CD4-positive, alpha-beta T cell (primary cell): ENCODE measurements at regions of chr19 and their contacts with region 1.

Region 1: DNA sequence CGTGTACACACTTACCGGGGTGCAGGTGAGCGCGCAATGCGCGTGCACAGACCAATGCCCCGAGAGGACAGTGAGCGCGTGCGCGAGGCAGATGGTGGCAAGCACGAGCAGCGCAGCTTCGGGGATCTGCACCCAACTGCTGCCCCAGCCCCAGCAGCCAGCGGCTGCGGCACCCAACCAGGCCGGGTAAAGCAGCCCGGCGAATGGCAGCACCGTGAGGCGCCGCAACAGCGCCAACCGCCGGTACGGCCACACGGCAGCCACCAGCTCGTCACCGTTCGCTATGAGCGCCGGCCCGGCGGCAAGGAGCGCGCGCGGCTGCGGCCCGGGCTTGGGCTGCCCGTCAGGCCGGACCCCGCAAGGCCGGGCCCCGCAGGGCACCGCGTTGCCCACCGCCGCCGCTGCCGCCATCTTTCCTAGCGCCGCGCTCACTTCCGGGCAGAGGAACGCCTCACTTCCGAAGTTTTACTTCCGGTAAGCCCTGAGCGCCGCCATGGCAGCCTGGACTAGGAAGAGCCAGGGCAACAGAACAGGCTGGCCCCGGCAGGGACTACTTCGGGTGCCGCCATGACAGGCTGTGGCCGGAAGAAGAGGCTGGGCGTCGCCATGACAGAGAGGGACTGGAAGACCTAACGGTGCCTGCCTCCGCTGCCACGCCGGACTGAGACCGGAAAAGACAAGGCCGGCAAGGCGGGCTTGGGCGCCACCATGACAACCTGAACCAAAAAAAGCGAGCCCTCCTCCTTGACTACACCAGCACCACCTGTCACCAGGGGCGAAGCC is at the start of gene ATP13A1:
- DNase-seq: peak; percentile 88 to 99 (median 93)
- ATAC-seq: peak; percentile 67
- H3K4me3 ChIP-seq: peak within 1 kb of the TSS; percentile 94
- H3K4me3 Mint-ChIP-seq: peak within 1 kb of the TSS; percentile 95
- H3K27ac ChIP-seq: peak within 1 kb of the TSS; percentile 96
- H3K27ac Mint-ChIP-seq: peak within 1 kb of the TSS; percentile 99
- H3K4me1 ChIP-seq: peaks cover 70% of the 10 kb centered on the region
- H3K4me1 Mint-ChIP-seq: peaks cover 47% of the 10 kb centered on the region
- H3K27me3 ChIP-seq: no peaks in the 10 kb centered on the region
- H3K27me3 Mint-ChIP-seq: no peaks in the 10 kb centered on the region
- CTCF ChIP-seq: no peak
- total RNA-seq, gene ATP13A1: 84.8 to 87.6 TPM

Region 2: DNA sequence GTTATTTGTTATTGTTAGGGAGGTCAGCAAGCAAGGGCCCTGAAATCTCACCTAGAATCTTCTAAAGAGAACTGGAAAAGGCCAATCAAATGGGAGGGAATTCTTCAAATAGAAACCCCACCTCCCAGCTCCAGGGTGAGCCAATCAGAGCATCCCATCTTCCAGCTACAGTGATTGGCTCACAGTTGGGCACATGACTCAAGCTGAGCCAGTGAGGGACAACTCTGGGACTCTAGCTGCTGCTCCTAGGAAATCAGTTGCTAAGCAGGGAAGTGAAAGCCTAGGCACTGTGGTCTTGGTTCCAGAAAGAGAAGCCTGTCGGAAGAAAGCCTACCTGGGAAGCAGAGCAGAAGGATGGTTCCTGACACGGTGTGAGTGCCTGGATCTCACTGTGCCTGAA is 403.7 kb before region 1 on chr19:
- CTCF ChIA-PET with region 1: no interaction called
- POLR2A ChIA-PET with region 1: no interaction called
- intact Hi-C with region 1: no loop called
- DNase-seq: no peak
- ATAC-seq: no peak
- H3K4me3 ChIP-seq: no peak overlapping the region
- H3K4me3 Mint-ChIP-seq: no peak overlapping the region
- H3K27ac ChIP-seq: no peak overlapping the region
- H3K27ac Mint-ChIP-seq: no peak overlapping the region
- H3K4me1 ChIP-seq: peaks cover 15% of the 10 kb centered on the region
- H3K4me1 Mint-ChIP-seq: no peaks in the 10 kb centered on the region
- H3K27me3 ChIP-seq: peaks cover 27 to 61% of the 10 kb centered on the region in 2 experiments
- H3K27me3 Mint-ChIP-seq: peaks cover 73% of the 10 kb centered on the region
- CTCF ChIP-seq: no peak

Region 3: GRCh38 chr19:19320362-19321142 is 342.9 kb before region 1 on chr19 and contains the starts of genes MAU2 and SUGP1:
- CTCF ChIA-PET with region 1: no interaction called
- POLR2A ChIA-PET with region 1: no interaction called
- intact Hi-C with region 1: loop called in 1 of 2 experiments (anchors 5 kb)
- DNase-seq: peak; percentile 81 to 96 (median 88)
- ATAC-seq: peak; percentile 88
- H3K4me3 ChIP-seq: peak within 1 kb of the TSS; percentile 71
- H3K4me3 Mint-ChIP-seq: peak within 1 kb of the TSS; percentile 100
- H3K27ac ChIP-seq: peak within 1 kb of the TSS; percentile 92 to 95
- H3K27ac Mint-ChIP-seq: peak within 1 kb of the TSS; percentile 99
- H3K4me1 ChIP-seq: peaks cover 57% of the 10 kb centered on the region
- H3K4me1 Mint-ChIP-seq: peaks cover 43% of the 10 kb centered on the region
- H3K27me3 ChIP-seq: no peaks in the 10 kb centered on the region
- H3K27me3 Mint-ChIP-seq: no peaks in the 10 kb centered on the region
- CTCF ChIP-seq: peak; percentile 16
- total RNA-seq, gene MAU2: 132 to 133 TPM
- total RNA-seq, gene SUGP1: 49.7 to 56.0 TPM

Region 4: GRCh38 chr19:19423322-19423721 is 240.1 kb before region 1 on chr19:
- CTCF ChIA-PET with region 1: no interaction called
- POLR2A ChIA-PET with region 1: no interaction called
- intact Hi-C with region 1: no loop called
- DNase-seq: no peak
- ATAC-seq: no peak
- H3K4me3 ChIP-seq: no peak overlapping the region
- H3K4me3 Mint-ChIP-seq: no peak overlapping the region
- H3K27ac ChIP-seq: no peak overlapping the region
- H3K27ac Mint-ChIP-seq: peak overlapping the region; percentile 20
- H3K4me1 ChIP-seq: peaks cover 82% of the 10 kb centered on the region
- H3K4me1 Mint-ChIP-seq: peaks cover 77% of the 10 kb centered on the region
- H3K27me3 ChIP-seq: no peaks in the 10 kb centered on the region
- H3K27me3 Mint-ChIP-seq: no peaks in the 10 kb centered on the region
- CTCF ChIP-seq: no peak

Region 5: DNA sequence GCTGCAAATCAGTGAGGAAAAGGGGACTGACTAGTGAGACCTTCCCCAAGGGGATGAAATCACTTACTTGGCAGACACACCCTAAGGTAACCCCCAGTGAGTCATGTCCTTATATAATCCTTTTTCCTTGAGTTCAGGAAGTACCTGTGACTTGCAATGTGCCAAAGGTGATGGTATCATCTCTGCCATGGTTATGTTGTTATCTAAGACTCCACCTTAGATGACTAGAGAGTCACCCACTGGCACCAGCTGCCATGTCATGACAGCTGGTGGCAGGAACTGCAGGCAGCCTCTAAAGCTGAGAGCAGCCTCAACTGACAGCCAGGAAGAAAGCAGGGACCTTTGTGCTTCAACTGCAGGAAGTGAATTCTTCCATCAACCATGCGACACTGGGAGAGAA is 57.4 kb before region 1 on chr19:
- CTCF ChIA-PET with region 1: no interaction called
- POLR2A ChIA-PET with region 1: interaction called, 10 read pairs
- intact Hi-C with region 1: no loop called
- DNase-seq: peak in 11 of 14 experiments; percentile 42 to 88 (median 64)
- ATAC-seq: peak; percentile 87
- H3K4me3 ChIP-seq: no peak overlapping the region
- H3K4me3 Mint-ChIP-seq: peak overlapping the region; percentile 77
- H3K27ac ChIP-seq: peak overlapping the region; percentile 64 to 66
- H3K27ac Mint-ChIP-seq: peak overlapping the region; percentile 86
- H3K4me1 ChIP-seq: peaks cover 70% of the 10 kb centered on the region
- H3K4me1 Mint-ChIP-seq: peaks cover 65% of the 10 kb centered on the region
- H3K27me3 ChIP-seq: no peaks in the 10 kb centered on the region
- H3K27me3 Mint-ChIP-seq: no peaks in the 10 kb centered on the region
- CTCF ChIP-seq: no peak

Region 6: GRCh38 chr19:19686580-19686979 is 23.1 kb after region 1 on chr19:
- CTCF ChIA-PET with region 1: no interaction called
- POLR2A ChIA-PET with region 1: interaction called, 63 read pairs
- intact Hi-C with region 1: no loop called
- DNase-seq: no peak
- ATAC-seq: peak; percentile 28
- H3K4me3 ChIP-seq: no peak overlapping the region
- H3K4me3 Mint-ChIP-seq: no peak overlapping the region
- H3K27ac ChIP-seq: no peak overlapping the region
- H3K27ac Mint-ChIP-seq: no peak overlapping the region
- H3K4me1 ChIP-seq: no peaks in the 10 kb centered on the region
- H3K4me1 Mint-ChIP-seq: no peaks in the 10 kb centered on the region
- H3K27me3 ChIP-seq: no peaks in the 10 kb centered on the region
- H3K27me3 Mint-ChIP-seq: no peaks in the 10 kb centered on the region
- CTCF ChIP-seq: no peak

Region 7: DNA sequence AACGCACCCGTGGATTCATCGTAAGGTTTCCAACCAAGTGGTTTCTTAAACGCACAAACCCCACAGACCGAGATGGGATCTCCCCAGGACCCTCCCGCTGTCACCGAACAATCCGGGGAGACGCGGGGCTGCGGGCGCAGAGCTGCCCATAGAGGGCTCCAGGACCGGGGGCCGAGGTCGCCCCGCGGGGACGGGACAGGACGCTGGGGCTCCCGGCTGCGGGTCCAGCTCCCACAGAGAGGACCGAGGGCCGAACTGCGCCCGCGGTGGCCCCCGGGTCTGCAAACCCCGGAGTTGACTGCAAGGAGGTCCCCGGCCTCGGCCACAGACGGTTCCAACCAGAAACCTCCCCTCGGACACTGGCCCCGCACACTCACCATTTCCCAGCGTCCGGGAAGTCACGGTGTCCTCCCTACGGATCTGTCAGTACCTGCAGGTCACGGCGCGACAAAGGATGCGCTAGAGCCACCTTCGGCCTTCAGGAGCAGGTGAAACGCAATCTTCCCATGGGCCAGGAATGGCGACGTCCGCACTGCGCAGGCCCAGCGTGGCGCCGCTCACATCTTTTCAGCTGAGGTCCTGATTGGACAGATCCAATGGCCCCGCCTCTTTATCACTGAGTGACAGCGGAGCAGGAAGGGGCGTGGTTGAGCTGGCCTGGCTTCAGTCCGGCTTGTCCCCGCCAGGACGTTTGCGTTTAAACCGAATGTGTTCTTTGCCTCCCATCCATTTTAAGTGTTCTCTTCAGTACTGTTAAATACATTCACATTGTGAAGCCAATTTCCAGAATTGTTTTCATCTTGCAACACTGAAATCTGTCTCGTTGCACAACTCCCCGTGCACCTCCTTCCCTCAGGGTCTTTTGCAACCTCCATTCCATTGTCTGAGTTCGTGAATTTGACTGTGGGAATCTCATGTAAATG is 69.4 kb after region 1 on chr19 and contains the start of gene ZNF14:
- CTCF ChIA-PET with region 1: no interaction called
- POLR2A ChIA-PET with region 1: interaction called, 112 read pairs
- intact Hi-C with region 1: loop called (anchors 1 to 2 kb)
- DNase-seq: peak; percentile 83 to 96 (median 88)
- ATAC-seq: peak; percentile 99
- H3K4me3 ChIP-seq: peak within 1 kb of the TSS; percentile 95
- H3K4me3 Mint-ChIP-seq: peak within 1 kb of the TSS; percentile 99
- H3K27ac ChIP-seq: peak within 1 kb of the TSS; percentile 69 to 79
- H3K27ac Mint-ChIP-seq: peak within 1 kb of the TSS; percentile 94
- H3K4me1 ChIP-seq: peaks cover 33% of the 10 kb centered on the region
- H3K4me1 Mint-ChIP-seq: peaks cover 27% of the 10 kb centered on the region
- H3K27me3 ChIP-seq: no peaks in the 10 kb centered on the region
- H3K27me3 Mint-ChIP-seq: no peaks in the 10 kb centered on the region
- CTCF ChIP-seq: no peak
- total RNA-seq, gene ZNF14: 36.9 to 37.3 TPM

Region 8: DNA sequence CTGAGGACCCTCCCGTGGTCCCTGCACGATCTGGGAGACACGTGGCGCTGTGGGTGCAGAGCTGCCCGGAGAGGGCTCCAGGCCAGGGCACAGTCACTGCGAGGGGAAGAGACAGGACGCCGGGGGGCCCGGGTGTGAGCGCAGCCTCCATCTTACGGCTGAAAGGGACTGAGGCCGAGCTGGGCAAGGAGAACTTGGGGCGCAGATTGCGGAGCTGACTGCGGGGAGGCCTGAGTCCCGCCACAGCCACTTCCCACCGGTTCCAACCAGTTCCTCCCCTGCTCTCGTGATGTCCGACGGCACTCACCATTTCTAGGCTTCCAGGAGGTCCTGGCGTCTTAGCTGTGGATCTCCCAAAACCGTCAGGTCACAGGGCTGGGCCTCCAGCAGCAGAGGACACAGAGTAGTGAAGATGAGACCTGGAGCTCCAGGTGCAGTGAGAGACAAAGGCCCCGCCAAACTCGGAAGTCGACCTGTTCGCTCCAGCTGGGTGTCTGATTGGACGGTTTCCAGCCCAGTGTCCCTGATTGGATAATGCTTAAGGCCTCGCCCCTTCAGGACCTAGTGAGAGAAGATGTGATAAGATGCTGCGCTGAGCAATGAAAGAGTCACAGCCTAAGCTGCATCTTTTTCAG is 197.4 kb after region 1 on chr19:
- CTCF ChIA-PET with region 1: no interaction called
- POLR2A ChIA-PET with region 1: interaction called, 85 read pairs
- intact Hi-C with region 1: loop called (anchors 5 kb)
- DNase-seq: peak in 11 of 14 experiments; percentile 2 to 87 (median 52)
- ATAC-seq: peak; percentile 67
- H3K4me3 ChIP-seq: peak overlapping the region; percentile 25
- H3K4me3 Mint-ChIP-seq: peak overlapping the region; percentile 68
- H3K27ac ChIP-seq: no peak overlapping the region
- H3K27ac Mint-ChIP-seq: peak overlapping the region; percentile 0
- H3K4me1 ChIP-seq: peaks cover 12% of the 10 kb centered on the region
- H3K4me1 Mint-ChIP-seq: peaks cover 8% of the 10 kb centered on the region
- H3K27me3 ChIP-seq: no peaks in the 10 kb centered on the region
- H3K27me3 Mint-ChIP-seq: no peaks in the 10 kb centered on the region
- CTCF ChIP-seq: no peak

Region 9: DNA sequence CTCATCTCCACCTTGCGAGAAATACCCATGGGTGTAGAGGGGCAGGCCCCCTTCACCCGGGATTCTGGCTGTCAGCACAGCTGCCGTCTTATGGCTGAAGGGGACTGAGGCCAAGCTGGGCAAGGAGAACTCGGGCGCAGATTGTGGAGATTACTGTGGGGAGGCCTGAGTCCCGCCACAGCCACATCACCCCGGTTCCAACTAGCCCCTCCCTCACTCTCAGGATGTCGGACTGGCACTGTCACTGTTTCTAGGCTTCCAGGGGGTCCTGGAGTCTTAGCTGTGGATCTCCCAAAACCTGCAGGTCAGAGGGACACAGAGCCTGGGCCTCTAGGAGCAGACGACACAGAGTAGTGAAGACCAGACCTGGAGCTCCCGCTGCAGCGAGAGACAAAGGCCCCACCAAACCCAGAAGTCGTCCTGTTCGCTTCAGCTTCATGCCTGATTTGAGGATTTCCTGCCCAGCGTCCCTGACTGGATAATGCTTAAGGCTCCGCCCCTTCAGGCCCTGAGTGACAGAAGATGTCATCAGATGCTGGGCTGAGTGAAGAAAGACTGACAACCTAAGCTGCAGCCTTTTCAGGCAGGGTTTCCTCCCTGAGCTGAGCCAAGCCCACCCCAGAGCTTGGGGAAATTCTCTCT is 293.1 kb after region 1 on chr19:
- CTCF ChIA-PET with region 1: interaction called, 5 read pairs
- POLR2A ChIA-PET with region 1: no interaction called
- intact Hi-C with region 1: loop called in 1 of 2 experiments (anchors 5 kb)
- DNase-seq: no peak
- ATAC-seq: no peak
- H3K4me3 ChIP-seq: no peak overlapping the region
- H3K4me3 Mint-ChIP-seq: no peak overlapping the region
- H3K27ac ChIP-seq: no peak overlapping the region
- H3K27ac Mint-ChIP-seq: no peak overlapping the region
- H3K4me1 ChIP-seq: peaks cover 6% of the 10 kb centered on the region
- H3K4me1 Mint-ChIP-seq: no peaks in the 10 kb centered on the region
- H3K27me3 ChIP-seq: no peaks in the 10 kb centered on the region
- H3K27me3 Mint-ChIP-seq: no peaks in the 10 kb centered on the region
- CTCF ChIP-seq: no peak